A549 (cell line): ENCODE measurements at regions of chr7 and their contacts with region 1.

Region 1: GRCh38 chr7:5665094-5666025 is 116.1 kb downstream of the RNF216 start:
- DNase-seq: peak; percentile 62 to 79
- ATAC-seq: peak; percentile 93 to 95
- H3K4me3 ChIP-seq: no peak overlapping the region
- H3K27ac ChIP-seq: no peak overlapping the region
- H3K4me1 ChIP-seq: peaks cover 4% of the 10 kb centered on the region; the same call in 1 of the 3 replicates
- CTCF ChIP-seq: peak; percentile 92
- EP300 ChIP-seq: no peak
- POLR2A ChIP-seq: no peak
- RAD21 ChIP-seq: peak; percentile 92 to 93

Region 2: DNA sequence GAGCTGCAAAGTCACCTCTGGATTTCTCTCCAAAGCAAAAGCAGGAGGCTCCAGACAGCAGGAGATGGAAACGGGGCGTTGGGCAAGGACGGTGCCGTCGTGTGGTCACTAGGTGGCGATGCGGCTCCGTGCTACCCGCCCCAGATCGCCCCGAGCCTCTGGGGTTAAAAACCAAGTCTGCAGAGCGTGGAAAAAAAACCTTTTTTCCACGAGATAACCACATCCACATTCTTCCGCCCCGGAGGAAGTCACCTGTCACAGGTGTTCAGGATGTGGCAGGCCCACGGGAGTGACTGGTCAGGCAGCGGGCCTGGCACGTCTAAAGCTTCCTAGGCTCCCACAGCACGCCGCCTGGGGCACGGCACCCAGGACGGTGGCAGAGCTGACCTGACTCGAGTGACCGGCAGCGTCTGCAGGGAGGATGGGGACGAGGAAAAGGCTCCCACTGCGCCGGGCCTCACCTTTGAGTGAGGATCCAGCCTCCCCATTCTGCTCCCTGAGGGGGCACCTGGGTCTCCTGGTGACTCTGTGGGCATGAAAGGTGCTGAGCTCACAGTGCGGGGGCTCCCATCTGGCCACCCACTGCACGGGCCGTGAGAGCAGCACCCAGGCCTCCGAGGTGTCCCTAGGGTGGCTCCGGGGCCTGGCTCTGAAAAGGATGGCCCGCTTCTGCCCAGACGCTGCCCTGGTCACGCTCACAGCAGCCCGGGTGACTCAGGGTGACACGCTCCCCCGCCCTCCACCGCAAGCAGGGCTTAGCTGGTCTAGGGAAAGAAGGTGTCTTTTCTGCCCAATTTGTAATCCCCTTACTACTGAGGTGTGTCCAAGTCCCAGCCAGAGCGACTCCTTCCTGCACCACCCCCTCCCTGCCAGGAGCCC is 170.4 kb before region 1 on chr7:
- CTCF ChIA-PET with region 1: interaction called, 86 read pairs
- POLR2A ChIA-PET with region 1: interaction called, 3 read pairs
- DNase-seq: peak; percentile 86 to 88
- ATAC-seq: peak; percentile 80 to 87
- H3K4me3 ChIP-seq: no peak overlapping the region
- H3K27ac ChIP-seq: peak overlapping the region; percentile 66 to 81
- H3K4me1 ChIP-seq: peaks cover 24% of the 10 kb centered on the region
- CTCF ChIP-seq: peak; percentile 93
- EP300 ChIP-seq: no peak
- POLR2A ChIP-seq: no peak
- RAD21 ChIP-seq: peak; percentile 98

Region 3: GRCh38 chr7:5586279-5586962 is 78.9 kb before region 1 on chr7:
- CTCF ChIA-PET with region 1: interaction called, 23 read pairs
- POLR2A ChIA-PET with region 1: no interaction called
- DNase-seq: no peak
- ATAC-seq: peak; percentile 12 to 44; a peak in 3 of 6 replicates
- H3K4me3 ChIP-seq: no peak overlapping the region
- H3K27ac ChIP-seq: no peak overlapping the region
- H3K4me1 ChIP-seq: peaks cover 5% of the 10 kb centered on the region
- CTCF ChIP-seq: no peak
- EP300 ChIP-seq: no peak
- POLR2A ChIP-seq: no peak
- RAD21 ChIP-seq: no peak

Region 4: DNA sequence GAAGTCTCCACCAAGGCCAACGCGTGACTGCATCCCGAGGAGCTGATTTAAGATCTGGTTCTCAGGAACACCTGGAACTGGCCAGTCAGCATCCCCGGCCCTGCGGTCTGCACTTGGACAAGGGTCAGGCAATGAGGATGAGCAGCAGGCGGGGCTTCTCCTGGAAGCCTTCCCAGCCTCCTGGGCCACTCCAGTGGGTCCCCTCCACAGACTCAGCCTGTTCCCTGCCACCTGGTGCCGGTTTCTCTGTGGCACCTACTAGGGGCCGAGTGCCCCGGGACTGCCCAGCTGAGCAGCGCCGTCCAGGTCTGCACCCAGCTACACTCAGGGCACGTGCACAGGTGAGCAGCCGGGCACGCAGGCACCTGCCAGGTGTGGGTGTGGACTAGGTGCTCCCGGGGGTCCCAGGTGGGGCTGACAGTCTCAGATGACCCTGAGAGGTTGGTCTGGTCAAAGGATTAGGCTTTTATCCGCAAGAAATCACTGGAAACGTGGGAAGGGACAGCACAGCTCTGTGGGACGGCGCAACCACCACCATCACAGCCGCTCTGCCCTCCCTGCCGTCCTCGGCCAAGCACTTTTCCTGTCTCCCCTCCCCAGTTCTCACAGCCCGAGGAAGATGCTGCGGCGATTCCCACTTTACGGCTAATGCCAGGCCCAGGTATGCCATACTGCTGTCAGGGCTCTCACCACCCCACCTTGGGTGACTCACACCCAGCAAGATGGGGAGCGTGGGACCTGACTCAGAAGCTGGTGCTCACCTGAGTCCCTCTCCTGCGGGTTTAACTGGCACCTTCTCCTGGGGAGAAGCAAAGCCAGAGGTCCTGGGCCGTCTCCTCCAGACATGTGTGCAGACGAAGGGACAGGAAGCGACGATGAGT is 49.9 kb before region 1 on chr7:
- CTCF ChIA-PET with region 1: interaction called, 14 read pairs
- POLR2A ChIA-PET with region 1: no interaction called
- DNase-seq: no peak
- ATAC-seq: peak; percentile 9 to 10; a peak in 3 of 6 replicates
- H3K4me3 ChIP-seq: no peak overlapping the region
- H3K27ac ChIP-seq: no peak overlapping the region
- H3K4me1 ChIP-seq: no peaks in the 10 kb centered on the region
- CTCF ChIP-seq: no peak
- EP300 ChIP-seq: no peak
- POLR2A ChIP-seq: no peak
- RAD21 ChIP-seq: no peak

Region 5: DNA sequence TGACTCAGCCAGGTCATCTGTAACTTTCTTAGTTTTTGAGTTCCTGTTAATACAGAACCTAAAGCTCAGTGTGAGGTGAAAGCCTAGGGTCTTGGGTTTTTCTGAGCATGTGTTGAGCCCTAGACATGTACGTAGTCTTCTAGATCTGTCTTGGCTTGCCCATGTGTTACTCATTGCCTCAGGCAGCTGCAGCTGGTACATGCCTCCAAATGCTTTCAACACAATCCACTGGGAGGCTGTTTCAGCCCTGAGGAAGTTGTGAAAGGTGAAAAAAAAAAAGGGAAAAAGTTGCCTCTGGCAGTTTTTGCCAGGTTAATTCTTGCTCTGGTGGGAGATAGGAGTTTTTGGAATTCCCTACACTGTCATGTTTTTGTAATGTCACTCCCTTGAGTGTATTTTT is 18.5 kb before region 1 on chr7:
- CTCF ChIA-PET with region 1: interaction called, 23 read pairs
- POLR2A ChIA-PET with region 1: no interaction called
- DNase-seq: no peak
- ATAC-seq: no peak
- H3K4me3 ChIP-seq: no peak overlapping the region
- H3K27ac ChIP-seq: no peak overlapping the region
- H3K4me1 ChIP-seq: 0 out of 3 replicates have a peak, but pooled peaks cover 3% of the 10 kb centered on the region
- CTCF ChIP-seq: no peak
- EP300 ChIP-seq: no peak
- POLR2A ChIP-seq: no peak
- RAD21 ChIP-seq: no peak

Region 6: GRCh38 chr7:5694912-5695726 is 29.8 kb after region 1 on chr7:
- CTCF ChIA-PET with region 1: interaction called, 65 read pairs
- POLR2A ChIA-PET with region 1: interaction called, 3 read pairs
- DNase-seq: no peak
- ATAC-seq: no peak
- H3K4me3 ChIP-seq: no peak overlapping the region
- H3K27ac ChIP-seq: peak overlapping the region; percentile 86 to 95; a peak in 5 of 6 replicates
- H3K4me1 ChIP-seq: peaks cover 46% of the 10 kb centered on the region
- CTCF ChIP-seq: no peak
- EP300 ChIP-seq: no peak
- POLR2A ChIP-seq: no peak
- RAD21 ChIP-seq: no peak